Activated CD8-positive, alpha-beta T cell treated with anti-CD3 and anti-CD28 coated beads, Interleukin-2, amount 10 ng/mL, durations not matched to agents 7 days and 5 days (primary cell): ENCODE measurements at regions of chr14 and their contacts with region 1.

Region 1: DNA sequence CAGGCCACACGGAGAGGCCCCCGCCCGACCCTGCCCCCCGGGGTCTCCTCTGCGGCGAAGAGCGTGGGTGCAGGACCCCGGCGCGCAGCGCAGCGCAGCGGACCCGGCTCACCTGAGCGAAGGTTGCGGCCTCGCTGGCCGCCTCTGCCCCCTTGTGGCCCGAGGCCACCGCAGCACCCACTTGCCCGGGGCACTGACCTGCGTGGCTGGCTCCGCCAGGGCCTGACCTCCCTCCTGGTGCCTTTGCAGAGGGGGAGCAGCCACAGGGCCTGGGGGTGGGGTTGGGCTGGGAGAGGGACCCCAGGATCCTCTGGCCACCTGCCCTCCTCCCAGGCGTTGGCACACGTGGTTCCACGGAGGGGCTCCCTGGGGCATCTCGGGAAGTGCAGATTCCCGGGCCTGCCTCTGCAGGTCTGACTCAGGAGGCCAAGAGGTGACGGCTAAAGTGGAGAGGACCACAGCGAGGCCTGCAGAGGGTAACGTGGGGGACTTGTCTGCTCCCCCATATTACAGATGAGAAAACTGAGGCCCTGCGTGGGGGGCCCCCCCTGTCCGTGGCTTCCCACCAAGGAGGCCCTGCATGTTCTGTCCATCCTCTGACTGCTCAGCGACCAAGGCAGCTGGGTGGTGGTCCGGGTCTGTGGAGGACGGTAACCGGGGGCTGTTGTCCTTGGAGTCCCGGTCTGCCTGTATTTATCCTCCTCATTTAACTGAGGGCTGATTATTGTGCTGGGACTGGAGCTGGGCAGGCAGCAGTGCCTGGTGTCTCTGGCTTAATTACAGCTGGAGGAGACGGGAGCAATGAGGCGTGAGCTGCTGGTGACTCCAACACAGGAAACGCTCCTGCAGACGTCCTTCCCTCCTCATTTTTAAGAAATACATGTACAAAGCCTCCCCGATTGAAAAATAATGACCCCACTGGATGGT is 67.9 kb upstream of the BEGAIN start:
- DNase-seq: peak; percentile 58
- ATAC-seq: peak; percentile 71
- H3K4me3 Mint-ChIP-seq: no peak overlapping the region
- H3K27ac Mint-ChIP-seq: no peak overlapping the region
- H3K4me1 Mint-ChIP-seq: peaks cover 9% of the 10 kb centered on the region
- H3K27me3 Mint-ChIP-seq: peaks cover 15% of the 10 kb centered on the region

Region 2: DNA sequence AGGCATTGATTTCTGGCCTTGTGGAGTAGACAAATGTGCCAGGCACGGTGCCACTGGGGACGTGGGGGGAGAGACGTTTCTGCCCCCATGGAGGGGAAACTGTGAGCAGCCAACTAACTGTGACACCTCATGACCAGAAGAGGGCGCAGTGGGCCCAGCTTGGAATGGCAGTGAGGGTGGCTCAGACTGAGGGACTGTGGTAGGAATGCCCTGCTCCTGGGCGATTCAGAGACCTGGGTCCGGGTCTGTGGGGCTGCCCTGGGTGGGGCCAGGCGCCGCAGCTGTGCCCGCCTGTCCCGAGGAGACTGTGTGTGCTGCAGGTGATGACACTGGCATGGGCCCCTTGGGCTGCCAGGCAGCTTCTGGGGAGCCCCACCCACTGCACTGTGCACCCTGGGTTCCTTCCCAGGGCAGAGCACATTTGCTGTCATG is 271.3 kb before region 1 on chr14:
- CTCF ChIA-PET with region 1: interaction called, 119 read pairs
- POLR2A ChIA-PET with region 1: no interaction called
- DNase-seq: peak; percentile 73
- ATAC-seq: peak; percentile 91
- H3K4me3 Mint-ChIP-seq: no peak overlapping the region
- H3K27ac Mint-ChIP-seq: no peak overlapping the region
- H3K4me1 Mint-ChIP-seq: peaks cover 15% of the 10 kb centered on the region
- H3K27me3 Mint-ChIP-seq: no peaks in the 10 kb centered on the region

Region 3: DNA sequence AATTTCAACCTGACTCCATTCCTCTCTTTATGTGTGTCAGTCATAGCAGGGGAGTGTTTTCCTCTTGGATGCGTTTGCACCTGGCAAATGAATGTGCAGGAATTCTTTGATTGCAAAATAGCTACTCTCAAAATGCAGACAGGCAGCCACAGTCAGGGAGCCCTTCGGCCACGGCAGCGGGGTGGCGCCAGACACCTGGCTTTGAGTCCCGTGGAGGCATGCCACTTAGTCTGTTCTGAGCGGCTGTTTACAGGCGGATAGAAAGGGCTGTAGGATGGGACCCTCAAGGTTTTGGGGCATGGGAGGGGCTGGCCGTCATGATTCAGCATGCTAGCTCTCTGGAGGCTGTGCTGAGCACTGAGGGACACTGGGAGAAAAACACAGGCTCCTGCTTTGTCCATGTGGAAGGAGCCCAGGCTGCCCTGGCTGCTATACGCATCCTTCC is 214.9 kb before region 1 on chr14:
- CTCF ChIA-PET with region 1: interaction called, 27 read pairs
- POLR2A ChIA-PET with region 1: no interaction called
- DNase-seq: peak; percentile 54
- ATAC-seq: peak; percentile 67
- H3K4me3 Mint-ChIP-seq: no peak overlapping the region
- H3K27ac Mint-ChIP-seq: no peak overlapping the region
- H3K4me1 Mint-ChIP-seq: peaks cover 17% of the 10 kb centered on the region
- H3K27me3 Mint-ChIP-seq: no peaks in the 10 kb centered on the region

Region 4: GRCh38 chr14:100524933-100525243 is 130.2 kb before region 1 on chr14:
- CTCF ChIA-PET with region 1: interaction called, 17 read pairs
- POLR2A ChIA-PET with region 1: no interaction called
- DNase-seq: peak; percentile 50
- ATAC-seq: no peak
- H3K4me3 Mint-ChIP-seq: no peak overlapping the region
- H3K27ac Mint-ChIP-seq: no peak overlapping the region
- H3K4me1 Mint-ChIP-seq: no peaks in the 10 kb centered on the region
- H3K27me3 Mint-ChIP-seq: no peaks in the 10 kb centered on the region

Region 5: DNA sequence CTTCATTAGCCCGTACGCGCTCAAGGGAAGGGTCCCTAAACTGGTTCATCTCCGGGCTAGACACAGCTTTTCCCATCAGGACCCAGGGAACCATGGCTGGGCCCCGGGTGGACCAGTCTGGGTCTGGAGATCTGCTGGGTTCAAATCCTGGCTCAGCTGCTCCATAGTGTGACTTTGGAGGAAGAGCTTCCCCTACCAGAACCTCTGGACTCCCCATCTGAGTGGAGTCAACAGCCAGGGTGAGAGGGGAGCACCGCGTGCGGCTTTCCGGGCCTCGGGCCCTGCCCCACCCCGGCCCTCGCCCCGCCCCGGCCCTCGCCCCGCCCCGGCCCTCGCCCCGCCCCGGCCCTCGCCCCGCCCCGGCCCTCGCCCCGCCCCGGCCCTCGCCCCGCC is 109.0 kb before region 1 on chr14:
- CTCF ChIA-PET with region 1: interaction called, 10 read pairs
- POLR2A ChIA-PET with region 1: no interaction called
- DNase-seq: no peak
- ATAC-seq: peak; percentile 52
- H3K4me3 Mint-ChIP-seq: no peak overlapping the region
- H3K27ac Mint-ChIP-seq: peak overlapping the region; percentile 52
- H3K4me1 Mint-ChIP-seq: peaks cover 36% of the 10 kb centered on the region
- H3K27me3 Mint-ChIP-seq: peaks cover 4% of the 10 kb centered on the region

Region 6: GRCh38 chr14:100761481-100761880 is 106.4 kb after region 1 on chr14:
- CTCF ChIA-PET with region 1: no interaction called
- POLR2A ChIA-PET with region 1: no interaction called
- DNase-seq: no peak
- ATAC-seq: no peak
- H3K4me3 Mint-ChIP-seq: no peak overlapping the region
- H3K27ac Mint-ChIP-seq: no peak overlapping the region
- H3K4me1 Mint-ChIP-seq: no peaks in the 10 kb centered on the region
- H3K27me3 Mint-ChIP-seq: peaks cover 11% of the 10 kb centered on the region